A673 (cell line): ENCODE measurements at regions of chr17 and their contacts with region 1.

Region 1: GRCh38 chr17:43315369-43315768 is 81.6 kb upstream of the RNU2-1 start:
- DNase-seq: no peak
- H3K4me3 ChIP-seq: no peak overlapping the region
- H3K27ac ChIP-seq: no peak overlapping the region
- H3K4me1 ChIP-seq: no peaks in the 10 kb centered on the region
- H3K27me3 ChIP-seq: no peaks in the 10 kb centered on the region
- CTCF ChIP-seq: no peak

Region 2: DNA sequence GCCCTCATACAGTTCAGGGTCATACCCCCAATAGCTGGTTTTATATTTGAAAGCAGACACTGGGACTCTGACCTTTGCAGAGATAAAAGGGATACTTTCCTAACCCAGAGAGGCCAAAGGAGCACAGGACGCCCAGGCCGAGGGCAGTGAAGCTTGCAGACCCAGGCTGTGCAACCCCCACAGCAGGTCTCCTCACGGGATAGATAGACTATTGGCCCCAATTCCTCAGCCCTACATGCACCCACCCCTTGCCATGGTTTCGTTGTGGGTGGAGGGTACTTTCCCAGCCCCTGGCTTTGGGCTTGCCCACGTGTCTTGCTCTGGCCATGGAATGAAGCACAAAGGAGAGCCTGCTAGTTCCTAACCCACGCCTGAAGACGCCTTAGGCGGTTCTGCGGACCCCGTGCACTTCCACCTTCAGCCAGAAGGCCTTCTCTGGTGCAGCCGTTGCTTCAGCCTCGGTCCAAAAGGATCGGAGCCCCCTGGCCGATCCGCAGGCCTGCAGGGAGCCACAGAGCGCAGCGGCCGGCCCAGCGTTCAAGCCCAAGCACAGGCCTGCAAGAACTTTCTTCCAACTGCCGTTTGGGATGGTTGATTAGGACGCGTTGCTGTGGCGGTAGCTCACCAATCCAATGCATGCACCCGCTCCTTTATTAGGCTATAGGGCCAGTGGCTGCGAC is 180.5 kb before region 1 on chr17:
- CTCF ChIA-PET with region 1: no interaction called
- POLR2A ChIA-PET with region 1: interaction called, 18 read pairs
- intact Hi-C with region 1: no loop called
- DNase-seq: no peak
- H3K4me3 ChIP-seq: no peak overlapping the region
- H3K27ac ChIP-seq: no peak overlapping the region
- H3K4me1 ChIP-seq: no peaks in the 10 kb centered on the region
- H3K27me3 ChIP-seq: no peaks in the 10 kb centered on the region
- CTCF ChIP-seq: no peak

Region 3: GRCh38 chr17:43217614-43218087 is 97.7 kb before region 1 on chr17:
- CTCF ChIA-PET with region 1: no interaction called
- POLR2A ChIA-PET with region 1: interaction called, 17 read pairs
- intact Hi-C with region 1: no loop called
- DNase-seq: no peak
- H3K4me3 ChIP-seq: no peak overlapping the region
- H3K27ac ChIP-seq: no peak overlapping the region
- H3K4me1 ChIP-seq: no peaks in the 10 kb centered on the region
- H3K27me3 ChIP-seq: no peaks in the 10 kb centered on the region
- CTCF ChIP-seq: no peak

Region 4: GRCh38 chr17:43350888-43351371 is 35.6 kb after region 1 on chr17:
- CTCF ChIA-PET with region 1: no interaction called
- POLR2A ChIA-PET with region 1: no interaction called
- intact Hi-C with region 1: no loop called
- DNase-seq: no peak
- H3K4me3 ChIP-seq: no peak overlapping the region
- H3K27ac ChIP-seq: no peak overlapping the region
- H3K4me1 ChIP-seq: peaks cover 10% of the 10 kb centered on the region
- H3K27me3 ChIP-seq: no peaks in the 10 kb centered on the region
- CTCF ChIP-seq: no peak